ENCODE measurements at regions of chr3 and their contacts with region 1.

Region 1: DNA sequence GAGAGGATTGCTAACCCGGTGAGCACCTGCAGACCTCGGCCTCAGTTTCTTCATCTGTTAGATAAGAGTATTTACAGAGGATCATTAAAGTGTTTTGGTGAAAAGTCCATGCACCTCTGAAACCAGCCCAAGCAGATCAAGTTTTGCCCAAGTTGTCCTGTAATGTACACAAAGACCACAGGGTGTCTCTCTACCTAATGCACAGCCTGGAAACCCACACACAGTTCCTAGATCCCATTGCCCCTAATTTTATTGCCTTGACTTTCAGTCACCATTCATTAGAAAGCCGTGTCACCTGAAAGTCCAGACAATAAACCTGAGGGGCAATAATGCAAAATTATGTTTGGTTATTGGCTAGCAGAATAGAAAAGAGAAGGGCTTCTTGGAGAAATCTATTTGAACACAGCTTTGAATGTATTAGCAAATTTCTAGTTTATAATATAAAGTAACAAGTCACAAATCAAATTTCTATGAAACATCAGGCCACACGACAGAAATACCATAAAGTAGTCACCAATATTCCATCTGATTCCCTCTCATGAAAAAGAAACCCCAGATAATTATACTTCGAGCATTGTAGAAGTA is 161.3 kb upstream of the SLC2A2 start:
- DNase-seq: peak in 1 of 3 donors; percentile 34
- ATAC-seq: peak; percentile 69
- H3K4me3 ChIP-seq: no peak overlapping the region
- H3K4me1 ChIP-seq: no peaks in the 10 kb centered on the region
- CTCF ChIP-seq: peak; percentile 25

Region 2: GRCh38 chr3:171459942-171460724 is 272.3 kb after region 1 on chr3 and contains the start of gene TNIK:
- intact Hi-C with region 1: loop called (anchors 5 to 10 kb)
- DNase-seq: peak; percentile 95 to 97 (median 96)
- ATAC-seq: peak; percentile 88
- H3K4me3 ChIP-seq: peak within 1 kb of the TSS; percentile 58
- H3K4me1 ChIP-seq: peaks cover 19% of the 10 kb centered on the region
- CTCF ChIP-seq: no peak
- total RNA-seq, gene TNIK: 27.2 to 33.0 (median 28.0) TPM

Measured in mucosa of descending colon (tissue), 3 donors.